Activated B cell treated with CpG ODN at 0.5 μM for 24 hours (primary cell): ENCODE measurements at regions of chr11 and their contacts with region 1.

Region 1: DNA sequence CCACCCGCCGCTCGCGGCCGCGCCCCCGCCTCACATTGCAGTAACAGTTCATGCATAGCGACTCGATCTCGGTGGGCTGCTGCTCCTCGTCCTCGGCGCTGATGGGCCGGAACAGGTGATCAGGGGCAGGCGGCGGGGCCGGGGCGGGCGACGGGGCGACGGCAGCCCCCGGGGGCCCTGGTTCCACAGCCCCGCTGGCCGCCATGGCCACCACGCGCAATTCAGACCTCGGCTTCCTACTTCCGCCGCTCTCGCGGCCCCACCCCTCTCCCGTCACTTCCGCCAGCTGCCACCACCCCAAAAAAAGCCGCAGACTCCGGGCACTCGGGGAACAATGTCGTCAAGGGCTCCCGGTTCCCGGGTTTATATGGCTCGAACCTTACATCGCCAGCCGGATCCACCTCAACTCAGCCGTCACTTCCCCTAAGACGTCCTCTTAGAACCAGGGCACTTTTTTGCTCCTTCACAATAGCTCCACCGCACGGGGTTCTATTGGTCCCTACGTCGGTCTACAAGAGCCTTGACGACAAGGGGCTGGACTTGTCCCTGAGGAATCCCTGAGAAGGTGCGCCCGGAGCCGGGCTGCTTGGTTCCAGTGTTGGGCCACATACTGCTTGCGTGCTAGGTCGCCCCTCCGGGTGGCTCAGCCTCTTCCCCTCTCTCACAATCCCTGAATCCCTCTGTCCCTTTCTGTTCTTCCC is at the start of gene ZPR1:
- DNase-seq: peak; percentile 81
- ATAC-seq: peak; percentile 81
- H3K4me3 Mint-ChIP-seq: peak within 1 kb of the TSS; percentile 98
- H3K27ac Mint-ChIP-seq: peak within 1 kb of the TSS; percentile 95
- H3K4me1 Mint-ChIP-seq: peaks cover 33% of the 10 kb centered on the region
- H3K27me3 Mint-ChIP-seq: peaks cover 4% of the 10 kb centered on the region
- CTCF ChIP-seq: no peak
- total RNA-seq, gene ZPR1: 69.0 and 78.7 TPM in 2 replicates

Region 2: DNA sequence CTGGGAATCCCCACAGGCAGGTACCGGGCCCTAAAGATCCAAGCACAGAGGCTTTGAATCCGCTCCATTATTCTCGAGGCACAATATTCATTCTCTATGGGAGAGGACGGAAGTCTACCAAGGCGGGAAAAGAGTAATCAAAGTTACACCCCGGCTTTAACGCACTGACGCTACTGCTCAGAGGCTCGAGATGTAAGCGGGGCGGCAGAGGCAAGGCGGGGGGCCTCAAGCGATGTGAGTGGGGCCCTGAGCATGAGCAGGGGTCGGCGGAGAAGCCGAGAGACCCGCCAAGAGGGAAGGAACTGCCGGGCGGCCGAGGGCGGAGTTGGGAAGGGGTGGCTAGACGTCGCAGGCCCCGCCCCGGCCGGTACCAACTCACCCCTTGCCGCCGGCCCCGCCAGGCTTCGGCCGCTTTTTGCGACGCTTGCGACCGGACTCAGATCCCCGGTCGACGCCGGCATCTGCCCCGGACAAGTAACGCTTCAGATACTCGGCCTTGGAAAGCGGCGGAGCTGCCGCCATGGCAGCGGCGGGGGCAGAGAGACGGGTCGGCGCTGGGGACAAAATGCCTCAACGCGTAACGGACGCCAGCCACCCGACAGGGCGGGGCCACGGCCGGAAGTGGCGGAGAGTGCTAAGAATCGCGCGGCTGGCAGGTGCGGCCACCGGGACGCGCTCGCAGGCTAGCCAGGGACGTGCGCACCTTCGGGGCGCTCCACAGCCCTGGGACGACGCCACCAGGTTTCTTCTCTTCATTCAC is 15.3 kb before region 1 on chr11 and contains the start of gene BUD13:
- CTCF ChIA-PET with region 1: interaction called, 6 read pairs
- POLR2A ChIA-PET with region 1: interaction called, 52 read pairs
- intact Hi-C with region 1: loop called (anchors 1 kb)
- DNase-seq: peak; percentile 96
- ATAC-seq: peak; percentile 89
- H3K4me3 Mint-ChIP-seq: peak within 1 kb of the TSS; percentile 98
- H3K27ac Mint-ChIP-seq: peak within 1 kb of the TSS; percentile 96
- H3K4me1 Mint-ChIP-seq: peaks cover 37% of the 10 kb centered on the region
- H3K27me3 Mint-ChIP-seq: no peaks in the 10 kb centered on the region
- CTCF ChIP-seq: no peak
- total RNA-seq, gene BUD13: 18.4 and 18.8 TPM in 2 replicates

Region 3: DNA sequence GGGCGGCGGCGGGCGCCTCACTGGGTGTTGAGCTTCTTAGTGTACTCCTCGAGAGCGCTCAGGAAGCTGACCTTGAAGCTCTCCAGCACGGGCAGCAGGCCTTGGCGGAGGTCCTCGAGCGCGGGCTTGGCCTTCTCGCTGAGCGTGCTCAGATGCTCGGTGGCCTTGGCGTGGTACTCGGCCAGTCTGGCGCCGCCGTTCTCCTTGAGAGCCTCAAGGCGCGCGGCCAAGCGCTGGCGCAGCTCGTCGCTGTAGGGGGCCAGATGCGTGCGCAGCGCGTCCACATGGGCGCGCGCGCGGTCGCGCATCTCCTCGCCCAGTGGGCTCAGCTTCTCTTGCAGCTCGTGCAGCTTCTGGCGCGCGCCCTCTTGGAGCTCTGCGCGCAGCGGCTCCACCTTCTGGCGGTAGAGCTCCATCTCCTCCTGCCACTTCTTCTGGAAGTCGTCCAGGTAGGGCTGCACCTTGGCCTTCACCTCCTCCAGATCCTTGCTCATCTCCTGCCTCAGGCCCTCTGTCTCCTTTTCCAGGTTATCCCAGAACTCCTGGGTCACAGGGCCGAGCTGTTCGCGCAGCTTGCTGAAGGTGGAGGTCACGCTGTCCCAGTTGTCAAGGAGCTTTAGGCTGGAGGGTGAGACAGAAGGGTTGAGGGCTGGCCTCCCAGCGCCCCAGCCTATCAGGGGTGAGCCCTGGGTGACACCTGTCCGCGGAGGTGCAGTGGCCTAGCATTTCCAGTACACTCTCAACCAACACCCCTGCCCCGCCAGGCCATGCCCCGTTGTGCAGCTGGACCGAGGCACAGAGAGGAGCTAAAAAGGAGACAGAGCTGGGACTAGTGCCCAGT is 48.1 kb after region 1 on chr11:
- CTCF ChIA-PET with region 1: interaction called, 28 read pairs
- POLR2A ChIA-PET with region 1: interaction called, 8 read pairs
- intact Hi-C with region 1: loop called (anchors 1 kb)
- DNase-seq: peak; percentile 59
- ATAC-seq: peak; percentile 87
- H3K4me3 Mint-ChIP-seq: peak overlapping the region; percentile 75
- H3K27ac Mint-ChIP-seq: no peak overlapping the region
- H3K4me1 Mint-ChIP-seq: peaks cover 13% of the 10 kb centered on the region
- H3K27me3 Mint-ChIP-seq: peaks cover 2% of the 10 kb centered on the region
- CTCF ChIP-seq: no peak

Region 4: GRCh38 chr11:116853461-116854073 is 65.6 kb after region 1 on chr11:
- CTCF ChIA-PET with region 1: interaction called, 3 read pairs
- POLR2A ChIA-PET with region 1: interaction called, 6 read pairs
- intact Hi-C with region 1: loop called (anchors 5 kb)
- DNase-seq: no peak
- ATAC-seq: peak; percentile 96
- H3K4me3 Mint-ChIP-seq: peak overlapping the region; percentile 39
- H3K27ac Mint-ChIP-seq: peak overlapping the region; percentile 16
- H3K4me1 Mint-ChIP-seq: peaks cover 55% of the 10 kb centered on the region
- H3K27me3 Mint-ChIP-seq: no peaks in the 10 kb centered on the region
- CTCF ChIP-seq: no peak

Region 5: GRCh38 chr11:117058761-117059261 is 270.9 kb after region 1 on chr11:
- CTCF ChIA-PET with region 1: interaction called, 3 read pairs
- POLR2A ChIA-PET with region 1: interaction called, 10 read pairs
- intact Hi-C with region 1: no loop called
- DNase-seq: no peak
- ATAC-seq: no peak
- H3K4me3 Mint-ChIP-seq: no peak overlapping the region
- H3K27ac Mint-ChIP-seq: peak overlapping the region; percentile 9
- H3K4me1 Mint-ChIP-seq: peaks cover 76% of the 10 kb centered on the region
- H3K27me3 Mint-ChIP-seq: no peaks in the 10 kb centered on the region
- CTCF ChIP-seq: no peak

Region 6: GRCh38 chr11:117107701-117108590 is 320.0 kb after region 1 on chr11:
- CTCF ChIA-PET with region 1: interaction called, 38 read pairs
- POLR2A ChIA-PET with region 1: no interaction called
- intact Hi-C with region 1: loop called (anchors 1 kb)
- DNase-seq: no peak
- ATAC-seq: no peak
- H3K4me3 Mint-ChIP-seq: no peak overlapping the region
- H3K27ac Mint-ChIP-seq: no peak overlapping the region
- H3K4me1 Mint-ChIP-seq: peaks cover 4% of the 10 kb centered on the region
- H3K27me3 Mint-ChIP-seq: no peaks in the 10 kb centered on the region
- CTCF ChIP-seq: no peak

Region 7: DNA sequence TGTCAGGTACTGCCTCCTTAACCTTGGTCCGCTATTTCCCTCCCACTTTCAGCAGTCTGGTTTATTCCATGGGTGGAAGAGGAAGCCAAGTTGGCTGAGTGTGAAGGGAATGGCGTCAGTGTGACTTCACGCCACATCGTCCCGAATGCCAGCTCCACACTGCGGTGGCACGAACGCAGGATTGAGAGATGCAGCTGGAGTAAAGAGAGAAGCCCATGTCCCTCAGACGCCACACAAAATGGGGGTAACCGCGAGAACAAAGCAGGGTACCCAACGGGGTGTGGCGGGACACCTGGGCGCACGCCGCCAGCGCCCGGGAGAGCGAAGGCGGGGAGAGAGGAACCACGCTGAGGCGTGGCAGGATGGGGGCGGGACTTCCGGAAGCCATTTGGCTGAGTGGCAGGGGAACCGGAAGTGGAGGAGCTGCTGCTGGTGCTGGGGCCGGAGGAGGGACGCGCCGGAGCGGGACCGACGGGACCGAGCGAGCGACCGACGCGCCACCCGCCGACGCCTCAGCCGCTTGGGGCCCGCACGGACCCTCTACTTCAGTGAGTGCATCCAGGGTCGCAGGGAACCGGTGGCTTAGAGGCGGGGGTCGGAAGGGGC is 356.0 kb after region 1 on chr11 and contains the start of gene PAFAH1B2:
- CTCF ChIA-PET with region 1: no interaction called
- POLR2A ChIA-PET with region 1: interaction called, 12 read pairs
- intact Hi-C with region 1: no loop called
- DNase-seq: peak; percentile 95
- ATAC-seq: peak; percentile 84
- H3K4me3 Mint-ChIP-seq: peak within 1 kb of the TSS; percentile 95
- H3K27ac Mint-ChIP-seq: peak within 1 kb of the TSS; percentile 95
- H3K4me1 Mint-ChIP-seq: peaks cover 40% of the 10 kb centered on the region
- H3K27me3 Mint-ChIP-seq: peaks cover 5% of the 10 kb centered on the region
- CTCF ChIP-seq: no peak
- total RNA-seq, gene PAFAH1B2: 71.3 and 78.7 TPM in 2 replicates